Cardiac septum (tissue), 1 donor: ENCODE measurements at regions of chr5 and their contacts with region 1.

Region 1: DNA sequence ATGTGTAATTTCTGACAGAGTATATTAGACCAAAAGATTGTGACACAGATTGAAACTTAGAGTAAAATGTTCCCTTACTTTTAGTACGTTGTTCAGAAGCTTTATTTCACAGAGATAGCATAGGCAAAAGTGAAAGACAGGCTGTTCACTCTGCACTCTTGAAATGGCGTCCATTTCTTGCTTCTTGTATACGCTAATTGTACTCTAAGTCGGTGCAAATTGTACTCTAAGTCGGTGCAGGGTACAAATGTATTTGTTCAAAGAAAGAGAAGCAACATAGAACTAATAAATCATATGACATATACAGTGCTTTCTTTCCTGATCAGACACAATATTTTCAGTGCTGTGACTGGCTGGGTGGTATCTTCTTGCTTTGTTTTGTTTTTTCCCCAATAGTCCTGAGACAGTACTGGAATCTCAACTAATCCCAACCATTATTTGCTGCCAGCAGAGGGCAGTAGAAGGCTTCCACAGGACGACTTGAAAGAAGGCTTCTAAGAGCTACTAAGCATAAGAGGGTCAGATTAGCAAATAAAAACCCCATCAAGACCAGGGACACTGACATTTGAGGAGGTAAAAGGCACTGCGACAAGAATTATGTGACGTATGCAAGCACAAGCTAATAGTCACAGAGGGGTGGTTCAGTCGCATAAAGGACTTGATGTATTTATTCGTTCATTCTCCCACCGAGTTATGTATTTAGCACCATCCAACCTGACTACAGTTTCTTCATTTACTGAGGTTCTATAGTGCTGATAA is 831.8 kb downstream of the TAF11L14 start:
- DNase-seq: no peak

Region 2: GRCh38 chr5:18366234-18366633 is 99.8 kb before region 1 on chr5:
- intact Hi-C with region 1: no loop called
- DNase-seq: no peak

Region 3: GRCh38 chr5:18699681-18700080 is 233.7 kb after region 1 on chr5:
- intact Hi-C with region 1: loop called (anchors 10 kb)
- DNase-seq: no peak

Region 4: GRCh38 chr5:19496056-19496455 is 1030.0 kb after region 1 on chr5:
- intact Hi-C with region 1: no loop called
- DNase-seq: no peak